Cardiac septum (tissue), 1 donor: ENCODE measurements at regions of chr16 and their contacts with region 1.

Region 1: GRCh38 chr16:49592546-49593423 is 219.2 kb downstream of the C16orf78 start:
- DNase-seq: peak; percentile 35

Region 2: DNA sequence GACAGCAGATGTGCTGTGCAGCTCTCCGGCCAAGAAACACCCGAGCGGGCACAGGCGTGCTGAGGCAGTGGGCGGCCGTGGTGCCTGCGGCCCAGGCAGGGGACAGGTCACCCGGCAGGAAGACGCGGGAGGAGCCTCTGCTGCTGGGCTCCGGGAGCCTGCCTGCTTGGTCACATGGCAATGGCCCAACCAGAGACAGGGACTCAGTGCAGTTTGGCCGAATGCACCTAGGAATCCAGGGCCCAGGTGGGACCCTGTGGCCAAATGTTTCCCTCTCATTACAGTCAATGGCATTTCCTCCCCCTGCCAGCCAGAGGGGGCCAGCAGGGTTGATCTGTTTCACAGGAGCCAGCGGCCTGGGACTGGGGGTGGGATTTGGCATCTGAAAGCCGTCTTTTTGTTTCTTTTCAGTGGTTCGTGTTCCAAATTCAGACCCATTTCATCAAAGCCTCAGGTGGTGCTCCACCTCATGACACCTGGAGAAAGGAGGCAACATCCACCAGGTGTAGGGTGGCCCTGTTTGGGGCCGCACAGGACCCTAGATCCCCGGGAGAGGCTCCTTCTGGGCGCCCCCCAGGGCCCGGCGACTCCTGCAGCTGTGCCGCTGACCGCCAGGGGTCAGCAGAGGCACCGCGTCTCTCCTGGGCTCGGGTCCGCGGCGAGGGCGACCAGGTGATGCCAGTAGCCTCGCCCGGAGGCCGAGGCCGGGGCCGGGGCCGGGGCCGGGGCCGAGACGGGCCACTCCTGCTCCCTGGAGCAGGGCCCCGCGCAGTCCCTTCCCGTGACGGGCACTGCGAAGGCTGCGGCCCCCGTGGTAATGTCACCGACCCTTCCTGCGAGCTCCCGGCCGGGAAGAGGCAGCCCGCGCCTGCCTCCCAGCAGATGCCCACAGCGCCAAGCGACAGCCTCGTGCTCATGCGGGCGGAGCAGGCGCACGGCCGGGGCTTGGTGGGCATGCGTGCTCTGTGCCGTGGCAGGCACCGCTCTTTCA is 100.7 kb before region 1 on chr16:
- intact Hi-C with region 1: loop called (anchors 5 kb)
- DNase-seq: peak; percentile 77

Region 3: DNA sequence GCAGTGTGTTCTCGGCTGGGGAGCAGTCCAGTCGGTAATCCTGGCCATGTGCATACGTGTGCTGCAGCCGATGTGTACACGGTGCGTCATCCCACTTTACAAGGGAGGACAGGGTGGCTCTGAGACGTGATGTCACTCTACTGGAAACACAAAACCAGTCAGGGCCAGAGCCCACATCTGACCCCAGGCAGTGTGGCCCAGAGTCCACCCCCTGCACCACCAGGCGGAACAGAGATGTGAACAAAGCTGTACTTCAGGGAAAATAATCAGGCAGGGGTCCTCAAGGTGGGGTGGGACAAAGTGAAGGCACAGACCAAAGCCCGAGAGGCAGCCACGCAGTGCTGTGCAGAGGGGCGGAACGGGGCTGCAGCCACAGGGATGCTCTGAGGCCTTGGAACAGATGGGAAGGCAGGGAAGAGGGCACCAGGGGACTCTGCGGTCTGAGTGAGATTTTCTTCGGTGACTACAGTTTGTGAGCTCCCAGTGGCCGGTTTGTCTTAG is 81.6 kb after region 1 on chr16:
- intact Hi-C with region 1: no loop called
- DNase-seq: no peak

Region 4: DNA sequence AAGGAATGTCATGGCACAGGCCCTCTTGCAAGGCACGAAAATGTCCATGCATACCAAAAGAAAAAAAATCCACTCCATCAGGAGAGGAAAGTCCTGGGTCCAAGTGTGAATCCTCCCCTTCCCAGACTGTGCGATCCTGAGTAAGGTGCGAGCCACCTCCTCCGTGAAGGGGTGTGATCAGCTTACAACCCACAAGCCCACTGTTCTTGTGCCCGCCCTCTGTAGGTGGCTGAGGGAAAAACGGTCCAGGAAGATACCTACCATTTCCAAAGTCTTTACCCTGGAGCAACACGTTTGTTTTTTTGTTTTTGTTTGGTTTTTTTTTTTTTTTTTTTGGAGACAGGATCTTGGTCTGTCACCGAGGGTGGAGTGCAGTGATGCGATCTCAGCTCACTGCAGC is 146.6 kb after region 1 on chr16:
- intact Hi-C with region 1: no loop called
- DNase-seq: no peak